AG04449 (cell line): ENCODE measurements at regions of chr1 and their contacts with region 1.

Region 1: DNA sequence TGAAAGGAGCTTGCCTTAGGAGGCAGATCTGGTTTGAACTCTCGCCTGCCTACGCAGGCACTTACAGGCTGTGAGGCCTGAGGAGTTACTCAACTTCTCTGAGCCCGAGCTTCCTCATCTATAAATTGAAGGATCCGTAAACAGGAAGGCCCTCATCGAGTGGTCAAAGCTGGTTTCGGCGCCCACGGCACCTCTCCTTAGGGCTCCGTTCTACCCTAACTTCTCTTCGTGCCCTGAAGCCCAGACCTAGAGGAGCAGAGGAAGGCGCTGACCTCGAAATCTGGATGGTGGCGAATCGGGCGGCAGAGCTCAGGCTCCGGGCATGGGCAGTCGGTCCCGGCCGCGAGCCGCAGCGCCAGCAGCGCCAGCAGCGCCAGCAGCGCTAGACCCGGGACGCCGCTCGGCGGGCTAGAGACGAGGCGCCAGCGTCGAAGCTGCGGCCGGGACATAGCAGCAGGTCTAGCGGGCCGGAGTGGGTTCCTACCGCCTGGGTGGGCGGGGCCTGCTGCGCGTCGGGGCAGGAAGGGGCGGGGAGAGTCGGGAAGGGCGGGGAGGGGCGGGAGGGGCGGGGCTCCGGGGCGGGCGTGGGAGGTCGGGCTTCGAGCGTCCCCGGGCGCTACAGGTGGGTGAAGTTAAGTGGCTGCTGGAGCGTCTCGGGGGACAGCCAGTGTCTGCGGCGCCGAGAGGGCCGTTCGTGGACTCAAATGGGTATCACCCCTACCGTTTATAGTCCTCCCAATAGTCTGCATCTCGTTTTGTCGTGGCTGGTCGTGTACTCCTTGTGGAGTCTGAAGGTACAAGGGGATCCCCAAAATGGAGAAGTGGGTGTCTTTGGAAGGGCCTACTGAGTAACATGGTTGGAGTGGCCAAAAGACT is at the start of gene CTBS:
- DNase-seq: no peak
- H3K4me3 ChIP-seq: peak within 1 kb of the TSS; percentile 73
- CTCF ChIP-seq: no peak

Region 2: GRCh38 chr1:84297546-84298244 is 276.5 kb before region 1 on chr1:
- CTCF ChIA-PET with region 1: no interaction called
- POLR2A ChIA-PET with region 1: no interaction called
- DNase-seq: no peak
- H3K4me3 ChIP-seq: no peak overlapping the region; the same call in 1 of the 2 replicates
- CTCF ChIP-seq: no peak

Region 3: GRCh38 chr1:84506002-84506728 is 68.0 kb before region 1 on chr1 and contains the starts of genes GNG5 and SPATA1:
- CTCF ChIA-PET with region 1: interaction called, 3 read pairs
- POLR2A ChIA-PET with region 1: interaction called, 19 read pairs
- DNase-seq: peak; percentile 56
- H3K4me3 ChIP-seq: peak within 1 kb of the TSS; percentile 92
- CTCF ChIP-seq: no peak

Region 4: GRCh38 chr1:84598846-84599741 is 24.9 kb after region 1 on chr1:
- CTCF ChIA-PET with region 1: no interaction called
- POLR2A ChIA-PET with region 1: interaction called, 14 read pairs
- DNase-seq: no peak
- H3K4me3 ChIP-seq: peak overlapping the region; percentile 28
- CTCF ChIP-seq: no peak